HEK293 (cell line): ENCODE measurements at regions of chr15 and their contacts with region 1.

Region 1: GRCh38 chr15:88454867-88455810 is 12.0 kb downstream of the MRPL46 start:
- H3K4me3 ChIP-seq: no peak overlapping the region
- H3K27ac ChIP-seq: no peak overlapping the region
- H3K4me1 ChIP-seq: no peaks in the 10 kb centered on the region
- CTCF ChIP-seq: peak; percentile 82

Region 2: GRCh38 chr15:88258093-88258641 is 197.0 kb before region 1 on chr15:
- CTCF ChIA-PET with region 1: interaction called, 10 read pairs
- POLR2A ChIA-PET with region 1: no interaction called
- H3K4me3 ChIP-seq: no peak overlapping the region
- H3K27ac ChIP-seq: no peak overlapping the region
- H3K4me1 ChIP-seq: no peaks in the 10 kb centered on the region; the same call in 1 of the 2 replicates
- CTCF ChIP-seq: no peak

Region 3: GRCh38 chr15:88274553-88275460 is 180.3 kb before region 1 on chr15:
- CTCF ChIA-PET with region 1: interaction called, 23 read pairs
- POLR2A ChIA-PET with region 1: no interaction called
- H3K4me3 ChIP-seq: no peak overlapping the region
- H3K27ac ChIP-seq: no peak overlapping the region
- H3K4me1 ChIP-seq: no peaks in the 10 kb centered on the region
- CTCF ChIP-seq: peak; percentile 66

Region 4: GRCh38 chr15:88331280-88331679 is 123.9 kb before region 1 on chr15:
- CTCF ChIA-PET with region 1: interaction called, 15 read pairs
- POLR2A ChIA-PET with region 1: no interaction called
- H3K4me3 ChIP-seq: no peak overlapping the region
- H3K27ac ChIP-seq: no peak overlapping the region
- H3K4me1 ChIP-seq: no peaks in the 10 kb centered on the region
- CTCF ChIP-seq: 0 out of 2 replicates have a peak, but pooled peaks have one; percentile 19

Region 5: DNA sequence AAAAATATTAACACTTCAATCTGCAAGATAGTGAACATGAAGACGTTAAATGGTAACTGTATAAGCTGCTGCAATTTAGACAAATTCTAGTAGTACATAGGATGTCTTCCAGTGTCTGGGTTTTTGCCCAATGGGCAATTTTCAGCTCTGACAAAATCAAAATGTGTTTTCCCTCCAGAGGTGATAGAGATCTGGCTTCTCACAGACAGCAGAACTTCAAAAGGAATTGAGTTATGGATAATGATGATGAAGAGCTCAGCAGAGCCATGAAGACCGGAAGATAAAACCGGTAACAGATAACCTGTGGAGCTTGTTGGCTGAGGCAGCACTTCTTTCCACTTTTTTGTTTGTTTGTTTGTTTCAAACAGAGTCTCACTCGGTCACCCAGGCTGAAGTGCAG is 109.2 kb before region 1 on chr15:
- CTCF ChIA-PET with region 1: no interaction called
- POLR2A ChIA-PET with region 1: no interaction called
- H3K4me3 ChIP-seq: no peak overlapping the region
- H3K27ac ChIP-seq: no peak overlapping the region
- H3K4me1 ChIP-seq: no peaks in the 10 kb centered on the region
- CTCF ChIP-seq: no peak

Region 6: DNA sequence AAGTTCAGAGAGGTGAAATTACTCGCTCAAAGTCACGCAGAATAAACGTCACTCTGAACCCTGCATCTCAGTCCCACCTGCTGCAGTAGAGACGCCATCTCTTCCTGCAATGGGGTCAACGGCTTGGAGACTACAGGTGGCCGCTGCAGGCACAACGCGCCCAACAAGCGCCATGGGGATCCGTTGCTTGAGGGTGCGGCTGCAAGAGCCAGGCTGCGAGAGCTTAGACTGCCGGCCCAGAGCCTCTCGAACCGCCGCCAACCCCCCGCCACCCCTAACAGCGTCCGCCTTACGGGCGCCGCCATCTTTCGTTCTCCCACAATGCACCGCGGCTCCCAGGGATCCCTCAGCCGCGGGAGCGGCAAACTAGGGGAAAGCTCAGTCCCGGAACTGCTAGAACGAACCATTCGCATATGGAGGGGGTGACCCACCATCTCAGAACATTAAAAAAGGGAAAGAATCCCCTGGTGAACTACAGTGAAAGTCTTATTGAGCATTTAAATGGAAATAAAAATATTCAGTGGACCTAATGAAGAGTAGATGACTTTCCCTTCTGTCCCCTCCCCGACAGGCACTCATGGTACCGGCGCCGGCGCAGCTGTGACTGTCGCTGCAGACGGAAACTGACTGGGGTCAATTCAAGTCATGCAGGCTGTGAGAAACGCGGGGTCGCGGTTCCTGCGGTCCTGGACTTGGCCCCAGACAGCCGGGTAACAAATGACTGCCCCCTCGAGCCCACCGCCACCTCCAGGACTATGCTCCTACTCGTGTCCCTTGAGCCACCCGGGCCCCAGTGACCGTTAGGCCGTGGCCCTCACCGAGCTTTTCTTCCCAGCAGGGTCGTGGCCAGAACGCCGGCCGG is 12.2 kb after region 1 on chr15 and contains the starts of genes MRPL46 and MRPS11:
- CTCF ChIA-PET with region 1: interaction called, 26 read pairs
- POLR2A ChIA-PET with region 1: interaction called, 19 read pairs
- H3K4me3 ChIP-seq: peak within 1 kb of the TSS; percentile 96
- H3K27ac ChIP-seq: peak within 1 kb of the TSS; percentile 83
- H3K4me1 ChIP-seq: peaks cover 4% of the 10 kb centered on the region; the same call in 1 of the 2 replicates
- CTCF ChIP-seq: no peak

Region 7: GRCh38 chr15:88615303-88616107 is 160.4 kb after region 1 on chr15:
- CTCF ChIA-PET with region 1: interaction called, 22 read pairs
- POLR2A ChIA-PET with region 1: no interaction called
- H3K4me3 ChIP-seq: no peak overlapping the region
- H3K27ac ChIP-seq: no peak overlapping the region
- H3K4me1 ChIP-seq: peaks cover 4% of the 10 kb centered on the region
- CTCF ChIP-seq: no peak